ENCODE measurements at regions of chr10 and their contacts with region 1.

Region 1: GRCh38 chr10:87887548-87888289 is 24.3 kb downstream of the PTEN start:
- DNase-seq: no peak
- H3K4me3 ChIP-seq: no peak overlapping the region
- H3K27ac ChIP-seq: no peak overlapping the region
- H3K4me1 ChIP-seq: no peaks in the 10 kb centered on the region
- H3K27me3 ChIP-seq: no peaks in the 10 kb centered on the region
- CTCF ChIP-seq: no peak

Region 2: DNA sequence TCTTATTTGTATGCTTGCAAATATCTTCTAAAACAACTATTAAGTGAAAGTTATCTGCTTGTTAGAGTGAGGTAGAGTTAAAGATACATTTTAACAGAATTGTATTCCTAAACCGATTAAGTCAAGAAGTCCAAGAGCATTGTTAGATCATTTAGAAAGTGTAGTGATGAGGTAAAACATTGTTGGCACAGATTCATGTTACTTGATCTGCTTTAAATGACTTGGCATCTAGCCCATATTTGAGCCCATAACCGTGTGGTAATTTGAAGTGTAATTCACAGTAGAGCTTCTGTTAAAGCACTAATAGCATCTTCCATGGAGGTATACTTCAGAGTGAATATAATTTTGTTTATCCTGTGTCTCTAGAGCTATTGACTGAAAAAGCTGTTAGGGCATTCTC is 37.9 kb after region 1 on chr10:
- CTCF ChIA-PET with region 1: no interaction called
- dilution Hi-C with region 1: no loop called
- in situ Hi-C with region 1: no loop called
- intact Hi-C with region 1: loop called (anchors 5 kb)
- DNase-seq: peak; percentile 24
- H3K4me3 ChIP-seq: no peak overlapping the region
- H3K27ac ChIP-seq: no peak overlapping the region
- H3K4me1 ChIP-seq: peaks cover 14% of the 10 kb centered on the region
- H3K27me3 ChIP-seq: no peaks in the 10 kb centered on the region
- CTCF ChIP-seq: no peak